Activated B cell treated with CpG ODN at 0.5 μM for 24 hours (primary cell): ENCODE measurements at regions of chr19 and their contacts with region 1.

Region 1: DNA sequence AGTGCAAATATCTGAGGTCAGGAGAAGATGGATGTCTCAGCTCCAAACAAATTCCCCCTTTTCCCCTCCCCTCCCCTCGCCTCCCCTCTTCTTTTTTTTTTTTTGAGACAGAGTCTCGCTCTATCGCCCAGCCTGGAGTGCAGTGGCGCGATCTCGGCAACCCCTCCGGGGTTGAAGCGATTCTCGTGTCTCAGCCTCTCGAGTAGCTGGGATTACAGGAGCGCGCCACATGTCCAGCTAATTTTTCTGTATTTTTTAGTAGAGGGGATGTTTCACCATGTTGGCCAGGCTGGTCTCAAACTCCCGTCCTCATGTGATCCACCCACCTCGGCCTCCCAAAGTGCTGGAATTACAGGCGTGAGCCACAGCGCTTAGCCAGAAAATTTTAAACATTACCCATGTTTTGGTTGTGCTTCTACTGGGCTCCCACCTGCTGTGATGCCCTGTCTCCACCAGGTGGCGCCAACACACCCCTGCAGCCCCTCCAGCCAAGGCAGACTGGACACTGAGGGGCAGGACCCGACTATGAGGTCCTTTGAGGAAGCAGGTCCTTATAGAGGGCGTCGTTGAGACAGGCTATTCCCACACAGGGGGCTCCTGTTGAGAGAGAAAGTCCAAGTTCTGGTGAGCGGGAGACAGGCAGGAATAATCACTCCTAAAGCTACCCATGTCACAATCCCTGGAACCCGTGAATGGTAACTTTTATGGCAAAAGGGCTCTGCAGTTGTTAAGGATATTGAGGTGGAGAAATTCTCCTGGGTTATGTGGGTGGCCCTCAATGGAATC is 6.3 kb downstream of the ERICH4 start:
- DNase-seq: peak; percentile 76
- ATAC-seq: peak; percentile 97
- H3K4me3 Mint-ChIP-seq: peak overlapping the region; percentile 80
- H3K27ac Mint-ChIP-seq: peak overlapping the region; percentile 46
- H3K4me1 Mint-ChIP-seq: peaks cover 23% of the 10 kb centered on the region
- H3K27me3 Mint-ChIP-seq: peaks cover 2% of the 10 kb centered on the region
- CTCF ChIP-seq: peak; percentile 72

Region 2: DNA sequence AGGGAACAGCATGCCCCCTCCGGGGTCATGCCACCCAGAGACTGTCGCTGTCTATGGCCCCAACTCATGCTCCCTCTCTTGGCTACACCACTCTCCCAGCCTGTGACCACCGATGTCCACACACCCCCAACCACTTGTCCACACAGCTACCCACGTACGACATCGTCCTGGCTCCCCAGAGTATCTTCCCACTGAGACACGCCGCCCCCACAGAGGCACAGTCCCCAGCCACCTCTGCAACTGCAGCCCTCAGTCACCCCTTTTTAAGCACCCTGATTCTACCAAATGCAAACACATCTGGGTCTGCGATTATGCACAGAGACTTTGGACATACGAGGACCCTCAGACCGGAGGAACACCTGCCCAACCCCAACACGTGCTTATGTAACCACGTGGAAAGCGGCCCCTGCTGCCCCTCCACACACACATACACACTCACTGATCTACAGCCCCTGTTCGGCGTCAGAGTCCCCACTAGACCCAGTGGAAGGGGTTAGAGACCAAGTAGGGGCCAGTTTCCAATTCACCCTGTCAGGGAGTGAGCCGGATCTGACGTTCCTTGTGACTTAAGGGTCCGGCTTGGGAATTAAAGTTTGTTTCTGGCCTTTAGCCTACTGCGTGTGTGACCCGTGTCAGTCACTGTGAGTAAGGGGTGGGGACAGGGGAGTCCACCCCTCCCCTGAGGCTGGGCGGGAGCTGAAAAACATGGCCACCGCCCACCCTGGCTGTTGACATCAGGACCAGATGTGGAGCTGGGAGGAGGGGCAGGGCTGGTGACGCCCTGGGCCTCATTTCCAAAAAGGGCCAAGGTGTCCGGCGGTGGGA is 242.1 kb before region 1 on chr19:
- CTCF ChIA-PET with region 1: no interaction called
- POLR2A ChIA-PET with region 1: no interaction called
- intact Hi-C with region 1: loop called (anchors 5 kb)
- DNase-seq: no peak
- ATAC-seq: no peak
- H3K4me3 Mint-ChIP-seq: no peak overlapping the region
- H3K27ac Mint-ChIP-seq: no peak overlapping the region
- H3K4me1 Mint-ChIP-seq: no peaks in the 10 kb centered on the region
- H3K27me3 Mint-ChIP-seq: peaks cover 3% of the 10 kb centered on the region
- CTCF ChIP-seq: no peak

Region 3: GRCh38 chr19:41515015-41515652 is 65.9 kb after region 1 on chr19:
- CTCF ChIA-PET with region 1: interaction called, 5 read pairs
- POLR2A ChIA-PET with region 1: no interaction called
- intact Hi-C with region 1: loop called (anchors 1 kb)
- DNase-seq: no peak
- ATAC-seq: no peak
- H3K4me3 Mint-ChIP-seq: no peak overlapping the region
- H3K27ac Mint-ChIP-seq: no peak overlapping the region
- H3K4me1 Mint-ChIP-seq: peaks cover 22% of the 10 kb centered on the region
- H3K27me3 Mint-ChIP-seq: peaks cover 7% of the 10 kb centered on the region
- CTCF ChIP-seq: no peak

Region 4: DNA sequence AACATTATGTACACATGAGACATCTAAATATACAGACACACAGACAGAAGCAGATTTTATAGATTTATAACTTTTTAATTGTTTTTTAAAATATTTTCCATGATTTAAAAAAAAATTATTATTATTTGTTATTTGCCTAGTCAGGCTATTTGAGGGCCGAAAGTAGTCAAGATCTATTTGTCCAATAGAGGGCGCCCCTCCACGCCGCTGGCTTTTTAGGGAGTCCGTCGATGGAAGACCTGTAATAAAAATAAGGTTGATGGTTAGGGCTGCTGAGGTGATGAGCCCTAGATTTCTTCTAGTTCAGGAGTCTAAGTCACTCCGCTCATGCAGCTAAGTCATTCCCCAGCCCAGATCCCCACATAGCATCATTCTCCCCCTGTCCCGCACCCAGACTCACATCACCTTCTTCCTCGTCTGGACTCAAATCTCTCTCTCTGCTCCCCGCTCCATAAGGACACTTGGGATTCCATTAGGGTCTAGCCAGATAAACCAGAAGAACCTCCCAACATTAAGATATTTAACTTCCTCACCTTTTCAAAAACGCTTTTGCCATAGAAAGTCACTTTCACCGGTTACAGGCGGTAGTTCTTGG is 92.8 kb after region 1 on chr19:
- CTCF ChIA-PET with region 1: interaction called, 93 read pairs
- POLR2A ChIA-PET with region 1: interaction called, 3 read pairs
- intact Hi-C with region 1: loop called (anchors 1 kb)
- DNase-seq: peak; percentile 56
- ATAC-seq: no peak
- H3K4me3 Mint-ChIP-seq: peak overlapping the region; percentile 70
- H3K27ac Mint-ChIP-seq: peak overlapping the region; percentile 57
- H3K4me1 Mint-ChIP-seq: peaks cover 59% of the 10 kb centered on the region
- H3K27me3 Mint-ChIP-seq: no peaks in the 10 kb centered on the region
- CTCF ChIP-seq: no peak

Region 5: DNA sequence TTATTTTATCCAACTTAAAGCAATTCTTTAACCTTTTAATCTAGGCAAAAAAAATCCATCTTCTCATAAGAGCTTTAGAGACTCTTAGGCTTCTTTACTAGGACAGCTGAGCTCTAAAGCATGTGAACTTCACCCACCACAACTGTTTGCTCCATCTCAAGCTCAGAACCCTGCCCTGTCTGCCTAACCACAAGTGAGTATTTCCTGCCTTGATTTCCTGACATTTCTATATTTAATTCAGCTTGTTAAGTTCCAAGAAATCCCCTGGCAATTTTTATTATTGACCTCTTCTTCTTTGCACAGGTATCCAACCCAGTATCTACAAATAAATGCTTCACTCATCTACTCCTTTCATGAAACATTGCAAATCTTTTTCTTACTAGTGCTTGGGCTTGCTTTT is 105.6 kb after region 1 on chr19:
- CTCF ChIA-PET with region 1: interaction called, 344 read pairs
- POLR2A ChIA-PET with region 1: interaction called, 5 read pairs
- intact Hi-C with region 1: no loop called
- DNase-seq: no peak
- ATAC-seq: no peak
- H3K4me3 Mint-ChIP-seq: peak overlapping the region; percentile 76
- H3K27ac Mint-ChIP-seq: peak overlapping the region; percentile 83
- H3K4me1 Mint-ChIP-seq: peaks cover 90% of the 10 kb centered on the region
- H3K27me3 Mint-ChIP-seq: no peaks in the 10 kb centered on the region
- CTCF ChIP-seq: no peak

Region 6: DNA sequence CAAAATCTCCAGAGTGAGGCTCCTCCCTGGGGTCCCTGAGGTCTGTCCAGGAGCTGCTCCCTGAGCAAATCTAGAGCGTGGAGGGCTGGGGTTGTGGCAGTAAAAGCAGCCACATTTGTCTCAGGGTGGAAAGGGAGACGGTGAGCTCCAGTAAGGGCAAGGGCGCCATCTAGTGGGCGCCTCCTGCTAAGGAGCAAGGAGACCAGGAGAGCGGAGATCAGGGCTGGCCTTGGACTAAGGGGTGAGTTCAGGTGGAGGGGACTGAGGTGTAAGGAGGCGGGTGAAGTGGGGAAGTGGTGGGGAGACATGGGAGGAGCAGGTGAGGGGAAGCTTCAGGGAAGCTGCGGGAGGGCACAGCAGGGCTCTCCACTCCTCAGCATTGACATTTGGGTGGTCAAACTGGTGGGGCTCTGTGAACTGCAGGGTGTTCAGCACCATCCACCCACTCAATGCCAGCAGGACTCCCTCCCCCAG is 121.4 kb after region 1 on chr19:
- CTCF ChIA-PET with region 1: interaction called, 344 read pairs
- POLR2A ChIA-PET with region 1: interaction called, 7 read pairs
- intact Hi-C with region 1: loop called (anchors 1 kb)
- DNase-seq: peak; percentile 77
- ATAC-seq: peak; percentile 97
- H3K4me3 Mint-ChIP-seq: no peak overlapping the region
- H3K27ac Mint-ChIP-seq: no peak overlapping the region
- H3K4me1 Mint-ChIP-seq: peaks cover 14% of the 10 kb centered on the region
- H3K27me3 Mint-ChIP-seq: peaks cover 2% of the 10 kb centered on the region
- CTCF ChIP-seq: peak; percentile 50